ENCODE measurements at regions of chr15 and their contacts with region 1.

Region 1: DNA sequence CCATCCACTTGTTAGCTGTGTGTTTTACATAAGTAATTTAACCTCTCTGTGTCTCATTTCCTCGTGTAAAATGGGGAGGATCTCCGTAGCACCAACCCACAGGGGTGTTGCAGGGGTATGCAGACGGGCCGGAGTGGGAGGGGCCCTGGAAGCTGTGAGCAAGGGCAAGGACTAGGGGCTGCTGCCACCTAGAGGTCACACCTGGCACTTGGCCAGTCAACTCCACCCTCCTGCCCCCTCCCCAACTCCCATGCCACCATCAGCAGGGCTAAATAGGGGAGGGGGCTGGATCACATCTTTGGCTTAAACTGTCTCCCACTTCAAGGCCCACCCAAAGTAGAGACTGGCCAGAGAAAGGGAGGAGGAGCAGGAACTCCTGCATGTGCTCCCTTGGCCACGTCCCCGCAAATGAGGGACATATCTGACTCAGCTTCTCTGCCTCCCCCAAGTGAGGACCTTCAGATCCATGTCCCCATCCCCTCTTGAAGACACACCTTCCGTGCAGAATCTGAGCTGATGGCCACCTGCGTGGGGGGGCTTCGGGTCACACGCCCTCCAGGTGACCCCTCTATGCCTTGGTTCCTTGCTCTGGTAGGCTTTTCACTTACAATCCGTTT is 2.6 kb downstream of the CCDC9B start:
- DNase-seq: peak; percentile 87
- H3K4me3 Mint-ChIP-seq: no peak overlapping the region
- H3K27ac Mint-ChIP-seq: peak overlapping the region; percentile 33
- H3K4me1 Mint-ChIP-seq: peaks cover 27% of the 10 kb centered on the region
- H3K27me3 Mint-ChIP-seq: peaks cover 7% of the 10 kb centered on the region

Region 2: DNA sequence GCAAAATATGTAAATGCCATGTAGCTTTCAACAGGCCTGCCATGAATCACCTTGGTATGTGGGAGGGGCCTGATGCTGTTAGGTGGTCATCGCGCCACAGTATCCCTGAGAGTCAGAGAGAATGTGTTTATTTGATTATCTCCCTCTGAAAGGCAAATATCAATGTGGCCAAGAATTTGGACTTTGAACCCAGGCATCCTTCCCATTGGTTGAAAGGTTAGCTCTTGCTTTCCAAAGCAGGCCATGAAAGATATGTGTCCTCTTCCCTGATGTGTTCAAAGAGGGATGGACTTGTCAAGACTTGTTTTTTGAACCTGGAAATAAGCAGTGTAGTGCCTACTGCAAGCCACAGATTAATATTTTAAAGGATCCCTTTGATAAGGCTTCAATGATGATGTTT is 335.9 kb before region 1 on chr15:
- CTCF ChIA-PET with region 1: no interaction called
- DNase-seq: no peak
- H3K4me3 Mint-ChIP-seq: no peak overlapping the region
- H3K27ac Mint-ChIP-seq: no peak overlapping the region
- H3K4me1 Mint-ChIP-seq: peaks cover 3% of the 10 kb centered on the region
- H3K27me3 Mint-ChIP-seq: no peaks in the 10 kb centered on the region

Region 3: DNA sequence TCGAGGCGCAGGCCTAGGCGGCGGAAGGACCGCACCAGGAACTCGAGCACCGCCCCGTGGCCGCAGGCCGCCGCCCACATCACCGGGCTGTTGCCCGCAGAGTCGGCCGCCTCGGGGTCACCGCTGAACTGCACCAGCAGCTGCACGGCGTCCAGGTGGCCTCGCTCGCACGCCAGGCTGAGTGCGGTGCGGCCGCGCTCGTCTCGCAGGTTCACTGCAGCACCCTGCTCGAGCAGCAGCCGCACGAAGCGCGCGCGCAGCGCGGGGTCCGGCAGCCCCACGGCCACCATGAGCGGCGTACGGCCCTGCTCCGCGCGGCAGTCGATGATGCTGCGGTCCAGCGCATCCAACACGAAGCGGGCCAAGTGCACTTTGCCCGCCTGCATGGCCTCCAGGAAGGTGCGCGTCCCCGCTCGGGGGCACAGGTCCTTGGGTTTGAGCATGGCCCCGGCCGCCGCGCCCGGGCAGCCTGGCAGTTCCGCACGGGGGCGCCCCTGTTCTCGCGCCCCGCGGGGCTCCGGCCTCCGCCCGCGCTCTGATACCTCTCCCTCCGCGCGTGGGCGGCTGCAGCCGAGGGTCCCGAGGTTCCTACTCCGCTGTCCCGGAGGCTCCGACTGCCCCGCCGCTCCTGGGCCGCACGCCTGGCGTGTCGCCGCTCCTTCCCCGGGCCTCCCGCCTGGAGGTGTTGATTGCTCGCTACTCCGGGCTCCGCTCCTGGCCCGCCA is 55.8 kb before region 1 on chr15:
- CTCF ChIA-PET with region 1: interaction called, 209 read pairs
- DNase-seq: peak; percentile 70
- H3K4me3 Mint-ChIP-seq: peak overlapping the region; percentile 66
- H3K27ac Mint-ChIP-seq: no peak overlapping the region
- H3K4me1 Mint-ChIP-seq: peaks cover 9% of the 10 kb centered on the region
- H3K27me3 Mint-ChIP-seq: peaks cover 75% of the 10 kb centered on the region

Region 4: DNA sequence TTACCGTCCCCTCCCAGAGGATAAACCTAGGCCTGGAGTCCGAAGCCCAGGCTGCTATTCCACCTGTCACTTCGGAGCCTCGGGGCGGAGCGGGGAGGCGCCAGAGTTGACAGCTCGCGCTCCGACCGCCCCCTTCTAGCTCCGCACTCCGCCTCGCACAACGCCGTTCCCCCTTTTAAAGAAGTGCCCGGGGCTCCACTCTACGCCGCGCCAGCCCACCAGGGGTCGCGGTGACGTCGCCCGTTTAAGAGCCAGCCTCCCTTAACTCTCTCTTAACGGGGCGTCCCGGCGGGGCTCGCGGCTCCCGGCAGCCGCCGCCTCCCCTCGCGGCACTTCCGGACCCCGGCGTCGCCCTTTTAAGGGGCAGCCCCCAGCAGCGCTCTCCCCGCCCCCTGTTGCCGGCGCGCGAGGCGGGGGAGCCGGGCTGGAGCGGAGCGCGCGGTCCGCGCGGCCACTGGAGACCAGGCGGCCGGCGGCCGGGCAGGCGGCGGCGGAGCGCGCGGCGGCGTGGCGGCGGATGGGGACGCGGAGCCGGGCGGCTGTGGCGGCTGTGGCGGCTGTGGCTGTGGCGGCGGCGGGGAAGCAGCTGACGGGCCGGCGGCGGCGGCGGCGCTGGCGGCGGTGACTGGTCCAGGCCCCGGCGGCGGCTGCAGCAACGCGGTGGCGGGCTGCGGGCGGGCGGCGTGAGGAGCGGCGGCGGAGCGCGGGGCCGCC is 14.8 kb before region 1 on chr15 and contains the start of gene INAFM2:
- CTCF ChIA-PET with region 1: interaction called, 425 read pairs
- DNase-seq: peak; percentile 94
- H3K4me3 Mint-ChIP-seq: peak within 1 kb of the TSS; percentile 71
- H3K27ac Mint-ChIP-seq: no peak within 1 kb of the TSS
- H3K4me1 Mint-ChIP-seq: peaks cover 29% of the 10 kb centered on the region
- H3K27me3 Mint-ChIP-seq: peaks cover 32% of the 10 kb centered on the region

Region 5: GRCh38 chr15:40388946-40389841 is 51.0 kb after region 1 on chr15:
- CTCF ChIA-PET with region 1: no interaction called
- DNase-seq: no peak
- H3K4me3 Mint-ChIP-seq: no peak overlapping the region
- H3K27ac Mint-ChIP-seq: peak overlapping the region; percentile 76
- H3K4me1 Mint-ChIP-seq: peaks cover 13% of the 10 kb centered on the region
- H3K27me3 Mint-ChIP-seq: no peaks in the 10 kb centered on the region

Region 6: DNA sequence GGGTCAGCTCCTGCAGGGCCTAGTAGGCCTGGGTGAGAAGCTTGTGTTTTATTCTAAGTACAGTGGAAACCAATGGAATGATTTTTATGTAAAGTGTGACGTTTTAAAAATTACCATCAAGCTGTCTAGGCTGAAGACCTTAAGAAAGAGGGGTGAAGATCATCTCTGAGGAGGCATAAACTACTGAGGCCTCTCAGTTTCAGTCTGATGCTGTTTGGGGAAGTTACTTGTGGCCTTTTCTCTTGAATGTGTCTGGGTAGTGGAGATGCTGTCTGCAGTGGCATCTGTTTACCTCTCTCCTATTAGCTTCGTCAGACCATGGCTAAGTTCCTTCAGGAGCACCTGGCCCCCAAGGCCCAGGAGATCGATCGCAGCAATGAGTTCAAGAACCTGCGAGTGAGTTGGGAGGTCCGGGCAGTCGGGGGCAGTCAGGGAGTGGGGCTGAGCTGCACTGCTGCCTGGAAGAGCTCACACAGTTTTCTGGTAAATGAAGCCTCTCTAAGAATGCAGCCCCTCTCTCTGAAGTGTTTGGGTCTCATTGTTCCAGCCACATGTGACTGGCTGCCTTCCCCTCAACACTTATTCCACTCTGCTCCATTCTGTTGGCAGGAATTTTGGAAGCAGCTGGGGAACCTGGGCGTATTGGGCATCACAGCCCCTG is 69.3 kb after region 1 on chr15:
- CTCF ChIA-PET with region 1: interaction called, 13 read pairs
- DNase-seq: no peak
- H3K4me3 Mint-ChIP-seq: no peak overlapping the region
- H3K27ac Mint-ChIP-seq: peak overlapping the region; percentile 38
- H3K4me1 Mint-ChIP-seq: peaks cover 52% of the 10 kb centered on the region
- H3K27me3 Mint-ChIP-seq: no peaks in the 10 kb centered on the region

Region 7: GRCh38 chr15:40421246-40422157 is 83.4 kb after region 1 on chr15:
- CTCF ChIA-PET with region 1: interaction called, 152 read pairs
- DNase-seq: peak; percentile 88
- H3K4me3 Mint-ChIP-seq: no peak overlapping the region
- H3K27ac Mint-ChIP-seq: no peak overlapping the region
- H3K4me1 Mint-ChIP-seq: no peaks in the 10 kb centered on the region
- H3K27me3 Mint-ChIP-seq: peaks cover 10% of the 10 kb centered on the region

Region 8: DNA sequence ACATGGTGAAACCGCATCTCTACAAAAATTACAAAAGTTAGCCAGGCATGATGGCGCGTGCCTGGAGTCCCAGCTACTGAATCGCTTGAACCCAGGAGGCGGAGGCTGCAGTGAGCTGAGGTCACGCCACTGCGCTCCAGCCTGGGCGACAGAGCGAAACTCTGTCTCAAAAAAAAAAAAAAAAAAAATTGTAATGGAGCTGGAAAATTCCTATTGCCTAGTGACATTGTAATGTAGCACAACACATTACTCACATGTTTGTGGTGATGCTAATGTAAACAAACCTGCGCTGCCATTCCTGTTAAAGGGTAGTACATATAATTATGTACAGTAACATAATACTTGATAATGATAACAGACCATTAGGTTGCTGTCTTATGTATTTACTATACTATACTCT is 295.0 kb after region 1 on chr15:
- CTCF ChIA-PET with region 1: no interaction called
- DNase-seq: no peak
- H3K4me3 Mint-ChIP-seq: no peak overlapping the region
- H3K27ac Mint-ChIP-seq: no peak overlapping the region
- H3K4me1 Mint-ChIP-seq: no peaks in the 10 kb centered on the region
- H3K27me3 Mint-ChIP-seq: no peaks in the 10 kb centered on the region

Measured in activated naive CD4-positive, alpha-beta T cell treated with anti-CD3 and anti-CD28 coated beads, Interleukin-2, amount 10 ng/mL, durations not matched to agents 7 days and 5 days (primary cell).